Activated naive CD4-positive, alpha-beta T cell treated with anti-CD3 and anti-CD28 coated beads for 36 hours (primary cell): ENCODE measurements at regions of chr7 and their contacts with region 1.

Region 1: GRCh38 chr7:45136106-45137060 is 21.2 kb upstream of the RAMP3 start:
- DNase-seq: peak; percentile 87
- H3K4me3 Mint-ChIP-seq: no peak overlapping the region
- H3K27ac Mint-ChIP-seq: no peak overlapping the region
- H3K4me1 Mint-ChIP-seq: peaks cover 7% of the 10 kb centered on the region
- H3K27me3 Mint-ChIP-seq: no peaks in the 10 kb centered on the region

Region 2: GRCh38 chr7:44858161-44858560 is 278.2 kb before region 1 on chr7:
- CTCF ChIA-PET with region 1: interaction called, 75 read pairs
- intact Hi-C with region 1: loop called (anchors 1 kb)
- DNase-seq: no peak
- H3K4me3 Mint-ChIP-seq: no peak overlapping the region
- H3K27ac Mint-ChIP-seq: no peak overlapping the region
- H3K4me1 Mint-ChIP-seq: peaks cover 23% of the 10 kb centered on the region
- H3K27me3 Mint-ChIP-seq: no peaks in the 10 kb centered on the region

Region 3: GRCh38 chr7:44973610-44974401 is 162.6 kb before region 1 on chr7:
- CTCF ChIA-PET with region 1: interaction called, 78 read pairs
- intact Hi-C with region 1: loop called (anchors 1 kb)
- DNase-seq: peak; percentile 69
- H3K4me3 Mint-ChIP-seq: no peak overlapping the region
- H3K27ac Mint-ChIP-seq: peak overlapping the region; percentile 83
- H3K4me1 Mint-ChIP-seq: peaks cover 36% of the 10 kb centered on the region
- H3K27me3 Mint-ChIP-seq: no peaks in the 10 kb centered on the region

Region 4: GRCh38 chr7:45089341-45089891 is 47.0 kb before region 1 on chr7:
- CTCF ChIA-PET with region 1: no interaction called
- intact Hi-C with region 1: no loop called
- DNase-seq: peak; percentile 79
- H3K4me3 Mint-ChIP-seq: peak overlapping the region; percentile 67
- H3K27ac Mint-ChIP-seq: no peak overlapping the region
- H3K4me1 Mint-ChIP-seq: peaks cover 7% of the 10 kb centered on the region
- H3K27me3 Mint-ChIP-seq: peaks cover 12% of the 10 kb centered on the region

Region 5: GRCh38 chr7:45111298-45112223 is 24.8 kb before region 1 on chr7 and contains the start of gene TBRG4:
- CTCF ChIA-PET with region 1: interaction called, 7 read pairs
- intact Hi-C with region 1: loop called (anchors 1 kb)
- DNase-seq: peak; percentile 96
- H3K4me3 Mint-ChIP-seq: peak within 1 kb of the TSS; percentile 85
- H3K27ac Mint-ChIP-seq: peak within 1 kb of the TSS; percentile 89
- H3K4me1 Mint-ChIP-seq: peaks cover 40% of the 10 kb centered on the region
- H3K27me3 Mint-ChIP-seq: no peaks in the 10 kb centered on the region
- total RNA-seq, gene TBRG4: 127 to 136 TPM

Region 6: GRCh38 chr7:45146531-45147379 is 10.4 kb after region 1 on chr7:
- CTCF ChIA-PET with region 1: interaction called, 13 read pairs
- intact Hi-C with region 1: no loop called
- DNase-seq: no peak
- H3K4me3 Mint-ChIP-seq: no peak overlapping the region
- H3K27ac Mint-ChIP-seq: no peak overlapping the region
- H3K4me1 Mint-ChIP-seq: no peaks in the 10 kb centered on the region
- H3K27me3 Mint-ChIP-seq: peaks cover 3% of the 10 kb centered on the region